GM23248 (cell line): ENCODE measurements at regions of chr10 and their contacts with region 1.

Region 1: DNA sequence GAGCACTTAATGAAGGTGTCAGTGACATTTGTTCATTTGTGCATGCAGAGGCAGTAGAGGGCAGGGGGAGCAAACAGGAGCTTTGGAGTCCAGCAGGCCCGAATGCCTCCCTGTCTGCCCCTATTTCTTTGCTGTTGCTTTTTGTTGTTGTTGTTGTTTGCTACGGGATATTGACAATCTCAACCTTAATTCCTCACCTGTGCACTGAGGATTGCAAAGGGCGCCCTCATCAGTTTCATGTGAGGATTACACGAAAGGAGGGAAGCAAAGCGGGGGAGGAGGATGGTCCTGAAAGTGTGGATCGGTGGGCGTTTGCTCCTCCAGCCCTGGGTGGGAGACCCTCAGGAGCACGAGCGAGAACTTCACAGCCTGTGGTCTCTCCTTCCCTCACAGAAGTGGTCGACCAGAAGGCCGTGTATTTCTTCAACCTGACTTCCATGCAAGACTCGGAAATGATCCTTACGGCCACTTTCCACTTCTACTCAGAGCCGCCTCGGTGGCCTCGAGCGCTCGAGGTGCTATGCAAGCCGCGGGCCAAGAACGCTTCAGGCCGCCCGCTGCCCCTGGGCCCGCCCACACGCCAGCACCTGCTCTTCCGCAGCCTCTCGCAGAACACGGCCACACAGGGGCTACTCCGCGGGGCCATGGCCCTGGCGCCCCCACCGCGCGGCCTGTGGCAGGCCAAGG is 9.5 kb downstream of the GDF10 start:
- DNase-seq: peak; percentile 29
- H3K4me3 ChIP-seq: no peak overlapping the region
- H3K27ac ChIP-seq: no peak overlapping the region
- H3K4me1 ChIP-seq: no peaks in the 10 kb centered on the region
- H3K27me3 ChIP-seq: peaks cover 15% of the 10 kb centered on the region

Region 2: GRCh38 chr10:47058961-47059391 is 250.6 kb before region 1 on chr10:
- in situ Hi-C with region 1: loop called (anchors 10 kb)
- DNase-seq: peak; percentile 59
- H3K4me3 ChIP-seq: no peak overlapping the region
- H3K27ac ChIP-seq: no peak overlapping the region
- H3K4me1 ChIP-seq: peaks cover 4% of the 10 kb centered on the region; the same call in 1 of the 2 replicates
- H3K27me3 ChIP-seq: peaks cover 44% of the 10 kb centered on the region